A673 (cell line): ENCODE measurements at regions of chr11 and their contacts with region 1.

Region 1: GRCh38 chr11:79447038-79447786 is 6.4 kb upstream of the TENM4 start:
- DNase-seq: no peak
- H3K4me3 ChIP-seq: no peak overlapping the region
- H3K27ac ChIP-seq: no peak overlapping the region
- H3K4me1 ChIP-seq: no peaks in the 10 kb centered on the region
- H3K27me3 ChIP-seq: peaks cover 43% of the 10 kb centered on the region
- CTCF ChIP-seq: no peak

Region 2: GRCh38 chr11:79414644-79415317 is 32.4 kb before region 1 on chr11:
- CTCF ChIA-PET with region 1: no interaction called
- POLR2A ChIA-PET with region 1: interaction called, 21 read pairs
- intact Hi-C with region 1: no loop called
- DNase-seq: no peak
- H3K4me3 ChIP-seq: no peak overlapping the region
- H3K27ac ChIP-seq: no peak overlapping the region
- H3K4me1 ChIP-seq: no peaks in the 10 kb centered on the region
- H3K27me3 ChIP-seq: no peaks in the 10 kb centered on the region
- CTCF ChIP-seq: no peak

Region 3: GRCh38 chr11:79536155-79536917 is 89.1 kb after region 1 on chr11:
- CTCF ChIA-PET with region 1: no interaction called
- POLR2A ChIA-PET with region 1: interaction called, 10 read pairs
- intact Hi-C with region 1: no loop called
- DNase-seq: no peak
- H3K4me3 ChIP-seq: no peak overlapping the region
- H3K27ac ChIP-seq: no peak overlapping the region
- H3K4me1 ChIP-seq: no peaks in the 10 kb centered on the region
- H3K27me3 ChIP-seq: peaks cover 4% of the 10 kb centered on the region
- CTCF ChIP-seq: no peak

Region 4: DNA sequence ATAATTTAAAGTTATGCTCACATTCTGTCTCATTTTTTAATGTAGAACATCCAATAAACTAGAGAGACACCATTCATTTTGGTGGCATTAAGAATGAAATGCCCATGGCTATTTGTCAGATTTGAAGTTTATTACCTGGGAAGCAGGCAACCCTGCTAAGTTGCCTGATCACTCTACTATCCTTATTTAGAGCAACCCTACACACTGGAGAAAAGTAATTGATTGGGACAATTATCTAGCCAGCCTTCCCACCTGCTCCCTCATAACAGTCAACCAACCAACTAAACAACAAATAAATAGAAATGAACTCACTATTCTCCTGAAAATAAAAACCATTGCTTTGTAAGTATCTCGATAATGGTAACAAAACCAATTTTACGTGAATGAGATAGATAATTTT is 1122.6 kb after region 1 on chr11:
- CTCF ChIA-PET with region 1: no interaction called
- POLR2A ChIA-PET with region 1: no interaction called
- intact Hi-C with region 1: no loop called
- DNase-seq: no peak
- H3K4me3 ChIP-seq: no peak overlapping the region
- H3K27ac ChIP-seq: no peak overlapping the region
- H3K4me1 ChIP-seq: no peaks in the 10 kb centered on the region
- H3K27me3 ChIP-seq: no peaks in the 10 kb centered on the region
- CTCF ChIP-seq: no peak